AG04450 (cell line): ENCODE measurements at regions of chr10 and their contacts with region 1.

Region 1: GRCh38 chr10:102776779-102777456 is 33.2 kb downstream of the WBP1L start:
- DNase-seq: peak; percentile 91
- H3K4me3 ChIP-seq: peak overlapping the region; percentile 51
- H3K27ac ChIP-seq: peak overlapping the region; percentile 65
- H3K27me3 ChIP-seq: no peaks in the 10 kb centered on the region
- CTCF ChIP-seq: no peak

Region 2: DNA sequence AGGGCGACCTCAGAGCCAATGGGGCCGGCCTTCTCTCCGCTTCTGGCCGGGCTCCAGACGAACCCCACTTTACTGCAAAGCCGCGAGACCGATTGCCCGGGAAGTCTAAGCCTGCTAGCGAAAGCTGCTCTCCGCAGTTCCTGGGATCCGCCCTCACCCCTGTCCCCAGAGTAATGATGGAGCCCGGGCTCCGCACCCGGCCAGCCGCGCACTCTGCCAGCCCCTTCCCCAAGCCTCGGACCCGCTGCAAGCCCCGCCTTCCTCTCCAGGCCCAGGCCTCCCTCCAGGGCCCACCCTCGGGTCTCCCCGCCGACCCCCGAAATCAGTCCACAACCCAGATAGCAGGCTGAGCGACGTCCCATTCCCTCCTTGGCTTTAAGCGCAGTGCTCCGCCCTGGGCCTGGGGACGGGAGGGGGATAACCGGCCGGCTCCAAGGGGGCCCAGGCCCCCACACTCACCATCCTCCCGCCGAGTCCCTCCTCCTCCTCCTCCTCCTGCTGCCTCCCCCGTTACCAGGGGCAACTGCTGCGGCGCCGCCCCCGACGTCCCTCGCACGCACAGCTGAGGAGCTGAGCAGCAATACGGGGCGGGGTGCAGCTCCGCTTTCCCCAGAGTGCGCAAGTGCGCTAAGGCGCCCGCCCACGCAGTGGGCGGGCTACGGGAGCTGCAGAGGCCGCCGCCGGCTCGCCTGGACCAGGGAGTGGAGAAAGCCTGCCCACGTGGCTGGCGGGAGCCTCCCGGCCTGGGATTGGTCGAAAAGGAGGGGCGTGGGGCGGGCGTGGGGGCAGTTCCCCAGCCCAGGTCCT is 62.9 kb before region 1 on chr10 and contains the start of gene ARL3:
- CTCF ChIA-PET with region 1: interaction called, 11 read pairs
- POLR2A ChIA-PET with region 1: no interaction called
- DNase-seq: peak; percentile 96
- H3K4me3 ChIP-seq: peak within 1 kb of the TSS; percentile 93
- H3K27ac ChIP-seq: peak within 1 kb of the TSS; percentile 70
- H3K27me3 ChIP-seq: no peaks in the 10 kb centered on the region
- CTCF ChIP-seq: peak; percentile 54; the same call in 1 of the 2 replicates
- polyA plus RNA-seq, gene ARL3: 16.5 and 19.2 TPM in 2 replicates

Region 3: DNA sequence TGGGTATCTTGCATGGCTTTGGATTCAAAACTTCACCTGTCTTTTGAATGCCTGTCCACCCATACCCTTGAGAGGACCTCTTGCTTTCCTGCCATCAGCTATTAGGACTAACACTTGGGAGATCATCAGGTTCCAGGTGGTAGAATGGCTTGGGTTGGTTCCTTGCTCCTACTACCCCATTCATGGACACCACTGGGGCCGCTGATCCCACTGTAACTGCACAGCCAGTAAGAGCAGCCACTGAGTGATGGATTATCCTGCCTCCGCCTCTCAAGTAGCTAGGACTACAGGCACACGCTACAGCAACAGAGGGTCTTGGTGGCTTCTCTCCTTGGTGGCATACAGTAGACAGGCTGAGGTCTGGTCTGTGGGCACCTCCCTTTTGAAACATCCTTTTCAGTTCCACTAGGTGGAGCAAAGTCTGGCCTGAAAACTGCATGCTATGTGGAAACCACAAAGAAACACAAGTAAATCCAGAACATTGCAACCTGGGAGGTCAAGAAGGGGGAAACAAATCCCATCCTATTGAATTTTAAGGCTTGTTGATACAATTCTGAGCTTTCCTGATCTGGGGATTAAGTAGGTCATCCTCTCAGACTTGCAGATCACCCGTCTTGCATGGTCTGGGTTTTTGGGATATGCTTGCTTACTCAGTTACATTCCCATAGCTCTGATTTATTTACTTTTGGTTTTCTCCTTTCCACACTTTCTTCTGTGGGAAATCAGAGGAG is 23.8 kb before region 1 on chr10:
- CTCF ChIA-PET with region 1: interaction called, 11 read pairs
- POLR2A ChIA-PET with region 1: interaction called, 7 read pairs
- DNase-seq: peak; percentile 59
- H3K4me3 ChIP-seq: no peak overlapping the region
- H3K27ac ChIP-seq: peak overlapping the region; percentile 52
- H3K27me3 ChIP-seq: no peaks in the 10 kb centered on the region
- CTCF ChIP-seq: peak; percentile 75

Region 4: GRCh38 chr10:102791754-102792395 is 15.0 kb after region 1 on chr10:
- CTCF ChIA-PET with region 1: no interaction called
- POLR2A ChIA-PET with region 1: no interaction called
- DNase-seq: no peak
- H3K4me3 ChIP-seq: no peak overlapping the region
- H3K27ac ChIP-seq: no peak overlapping the region
- H3K27me3 ChIP-seq: no peaks in the 10 kb centered on the region
- CTCF ChIP-seq: no peak

Region 5: GRCh38 chr10:104485632-104486031 is 1708.7 kb after region 1 on chr10:
- CTCF ChIA-PET with region 1: no interaction called
- POLR2A ChIA-PET with region 1: interaction called, 12 read pairs
- DNase-seq: no peak
- H3K4me3 ChIP-seq: no peak overlapping the region
- H3K27ac ChIP-seq: no peak overlapping the region
- H3K27me3 ChIP-seq: no peaks in the 10 kb centered on the region
- CTCF ChIP-seq: no peak